K562 (cell line): ENCODE measurements at regions of chr5 and their contacts with region 1.

Region 1: GRCh38 chr5:179697993-179698934 is 503 bp upstream of the CANX start:
- DNase-seq: peak; percentile 97 to 99 (median 98)
- ATAC-seq: peak; percentile 93
- H3K4me3 ChIP-seq: peak overlapping the region; percentile 86
- H3K27ac ChIP-seq: peak overlapping the region; percentile 98
- H3K4me1 ChIP-seq: peaks cover 16 to 38% of the 10 kb centered on the region in 2 experiments
- H3K27me3 ChIP-seq: no peaks in the 10 kb centered on the region
- CTCF ChIP-seq: 0 out of 6 replicates have a peak, but pooled peaks of 1 of the 3 experiments have one; percentile 0
- EP300 ChIP-seq: peak; percentile 4; the same call in 1 of the 2 replicates
- POLR2A ChIP-seq: peak; percentile 93
- RAD21 ChIP-seq: no peak

Region 2: GRCh38 chr5:179680780-179681401 is 17.4 kb before region 1 on chr5 and contains the start of gene CBY3:
- CTCF ChIA-PET with region 1: no interaction called
- POLR2A ChIA-PET with region 1: interaction called, 12 read pairs
- in situ Hi-C with region 1: no loop called
- intact Hi-C with region 1: no loop called
- DNase-seq: peak in 1 of 4 experiments; percentile 28
- ATAC-seq: no peak
- H3K4me3 ChIP-seq: no peak within 1 kb of the TSS
- H3K27ac ChIP-seq: no peak within 1 kb of the TSS; the same call in 2 of the 3 replicates
- H3K4me1 ChIP-seq: peaks cover 9 to 30% of the 10 kb centered on the region in 2 experiments; a peak in 4 of 5 replicates
- H3K27me3 ChIP-seq: no peaks in the 10 kb centered on the region
- CTCF ChIP-seq: no peak
- EP300 ChIP-seq: no peak
- POLR2A ChIP-seq: no peak
- RAD21 ChIP-seq: no peak
- polyA plus RNA-seq, gene CBY3: not detected

Region 3: GRCh38 chr5:179716286-179716685 is 18.0 kb after region 1 on chr5:
- CTCF ChIA-PET with region 1: no interaction called
- POLR2A ChIA-PET with region 1: interaction called, 13 read pairs
- in situ Hi-C with region 1: no loop called
- intact Hi-C with region 1: no loop called
- DNase-seq: no peak
- ATAC-seq: no peak
- H3K4me3 ChIP-seq: no peak overlapping the region
- H3K27ac ChIP-seq: no peak overlapping the region
- H3K4me1 ChIP-seq: no peaks in the 10 kb centered on the region
- H3K27me3 ChIP-seq: no peaks in the 10 kb centered on the region
- CTCF ChIP-seq: no peak
- EP300 ChIP-seq: no peak
- POLR2A ChIP-seq: no peak
- RAD21 ChIP-seq: no peak

Region 4: GRCh38 chr5:179732417-179732917 is 34.2 kb after region 1 on chr5 and contains the start of gene MAML1:
- CTCF ChIA-PET with region 1: no interaction called
- POLR2A ChIA-PET with region 1: interaction called, 17 read pairs
- in situ Hi-C with region 1: no loop called
- intact Hi-C with region 1: loop called (anchors 1 kb)
- DNase-seq: peak; percentile 99 to 100 (median 99)
- ATAC-seq: peak; percentile 96
- H3K4me3 ChIP-seq: peak within 1 kb of the TSS; percentile 89
- H3K27ac ChIP-seq: peak within 1 kb of the TSS; percentile 86
- H3K4me1 ChIP-seq: peaks cover 13 to 18% of the 10 kb centered on the region in 2 experiments
- H3K27me3 ChIP-seq: no peaks in the 10 kb centered on the region
- CTCF ChIP-seq: no peak
- EP300 ChIP-seq: no peak
- POLR2A ChIP-seq: peak; percentile 81
- RAD21 ChIP-seq: 0 out of 4 replicates have a peak, but pooled peaks of 1 of the 2 experiments have one; percentile 9
- polyA plus RNA-seq, gene MAML1: 0.32 to 0.45 TPM

Region 5: GRCh38 chr5:179763215-179763945 is 65.1 kb after region 1 on chr5:
- CTCF ChIA-PET with region 1: no interaction called
- POLR2A ChIA-PET with region 1: no interaction called
- in situ Hi-C with region 1: no loop called
- intact Hi-C with region 1: no loop called
- DNase-seq: peak; percentile 75 to 84 (median 79)
- ATAC-seq: peak; percentile 82
- H3K4me3 ChIP-seq: no peak overlapping the region
- H3K27ac ChIP-seq: no peak overlapping the region
- H3K4me1 ChIP-seq: peaks cover 27 to 52% of the 10 kb centered on the region in 2 experiments
- H3K27me3 ChIP-seq: no peaks in the 10 kb centered on the region
- CTCF ChIP-seq: peak; percentile 87 to 99 (median 98)
- EP300 ChIP-seq: no peak
- POLR2A ChIP-seq: no peak
- RAD21 ChIP-seq: peak; percentile 73 to 79